ENCODE measurements at regions of chr15 and their contacts with region 1.

Region 1: GRCh38 chr15:33298631-33299030 is 12.1 kb upstream of the RYR3 start:
- DNase-seq: no peak
- H3K4me3 ChIP-seq: no peak overlapping the region
- H3K27ac ChIP-seq: no peak overlapping the region
- H3K4me1 ChIP-seq: no peaks in the 10 kb centered on the region
- H3K27me3 ChIP-seq: no peaks in the 10 kb centered on the region
- CTCF ChIP-seq: no peak
- POLR2A ChIP-seq: no peak

Region 2: DNA sequence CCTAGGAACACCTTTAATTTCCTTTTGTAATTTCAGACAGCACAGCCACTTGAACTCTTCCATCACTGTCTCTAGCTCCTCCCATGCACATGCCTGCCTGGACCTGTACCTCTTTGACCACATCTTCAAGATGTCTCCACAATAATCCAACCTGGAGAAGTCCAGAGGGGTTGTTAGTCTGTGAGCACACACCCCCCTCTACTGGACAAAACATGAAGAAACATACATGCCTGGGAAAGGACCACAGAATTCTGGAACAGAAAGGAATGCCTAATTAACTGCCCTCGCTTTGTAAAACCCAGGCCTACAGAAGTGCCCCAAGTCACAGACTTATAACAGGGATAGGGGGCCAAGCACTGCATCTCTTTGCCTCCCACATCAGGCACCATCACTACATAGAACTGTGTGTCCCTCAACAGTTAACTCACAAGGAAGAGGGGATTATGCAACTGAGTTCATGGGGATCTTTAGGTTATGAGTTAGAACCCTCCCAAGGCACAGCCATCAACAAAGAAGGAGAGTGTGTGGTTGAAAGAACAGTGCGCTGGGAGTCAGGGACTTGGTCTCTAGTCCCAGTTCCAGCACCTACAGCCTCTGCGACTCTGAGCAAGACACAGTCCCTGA is 165.8 kb before region 1 on chr15:
- intact Hi-C with region 1: no loop called
- DNase-seq: no peak
- H3K4me3 ChIP-seq: no peak overlapping the region
- H3K27ac ChIP-seq: no peak overlapping the region
- H3K4me1 ChIP-seq: no peaks in the 10 kb centered on the region
- H3K27me3 ChIP-seq: no peaks in the 10 kb centered on the region
- CTCF ChIP-seq: peak; percentile 15 to 52 (median 45)
- POLR2A ChIP-seq: no peak

Region 3: GRCh38 chr15:33262306-33262705 is 36.3 kb before region 1 on chr15:
- intact Hi-C with region 1: no loop called
- DNase-seq: no peak
- H3K4me3 ChIP-seq: no peak overlapping the region
- H3K27ac ChIP-seq: no peak overlapping the region
- H3K4me1 ChIP-seq: no peaks in the 10 kb centered on the region
- H3K27me3 ChIP-seq: no peaks in the 10 kb centered on the region
- CTCF ChIP-seq: no peak
- POLR2A ChIP-seq: no peak

Region 4: DNA sequence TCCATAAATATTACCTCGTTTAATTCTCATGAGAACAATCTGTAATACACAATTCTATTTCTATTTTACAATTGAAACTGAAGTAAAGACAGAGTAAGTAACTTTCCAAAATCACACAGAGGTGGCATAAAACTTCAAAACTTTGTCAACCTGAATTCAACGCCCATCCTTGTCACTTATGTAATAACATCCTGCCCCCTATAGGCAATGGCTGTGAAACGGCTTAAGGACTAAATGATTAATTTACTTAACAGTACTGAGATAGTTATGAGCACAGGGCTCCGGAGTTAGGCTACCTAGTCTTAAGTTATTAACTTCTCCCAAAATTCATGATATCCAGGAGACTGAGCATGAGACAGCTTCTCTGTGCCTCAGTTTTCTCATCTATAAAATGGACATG is 376.6 kb after region 1 on chr15:
- intact Hi-C with region 1: loop called in 1 of 2 experiments (anchors 5 kb)
- DNase-seq: peak in 1 of 7 donors; percentile 36
- H3K4me3 ChIP-seq: no peak overlapping the region
- H3K27ac ChIP-seq: no peak overlapping the region
- H3K4me1 ChIP-seq: no peaks in the 10 kb centered on the region
- H3K27me3 ChIP-seq: no peaks in the 10 kb centered on the region
- CTCF ChIP-seq: peak; percentile 29 to 46 (median 44)
- POLR2A ChIP-seq: no peak